CD14-positive monocyte (primary cell): ENCODE measurements at regions of chr7 and their contacts with region 1.

Region 1: GRCh38 chr7:2567679-2568278 is 9.0 kb downstream of the IQCE start:
- DNase-seq: peak in 2 of 3 donors; percentile 27 to 38
- H3K4me3 ChIP-seq: peak overlapping the region in 1 of 3 experiments; percentile 36
- H3K4me3 Mint-ChIP-seq: peak overlapping the region in 1 of 2 donors; percentile 67
- H3K27ac ChIP-seq: no peak overlapping the region
- H3K27ac Mint-ChIP-seq: no peak overlapping the region
- H3K4me1 ChIP-seq: peaks cover 8 to 9% of the 10 kb centered on the region in 2 donors
- H3K4me1 Mint-ChIP-seq: peaks cover 8% of the 10 kb centered on the region
- H3K27me3 ChIP-seq: no peaks in the 10 kb centered on the region
- H3K27me3 Mint-ChIP-seq: peaks cover 0 to 4% (median 0%) of the 10 kb centered on the region in 3 donors
- CTCF ChIP-seq: peak; percentile 68

Region 2: GRCh38 chr7:2477447-2478398 is 90.1 kb before region 1 on chr7:
- intact Hi-C with region 1: loop called in 1 of 2 experiments (anchors 10 kb)
- DNase-seq: peak; percentile 72 to 73 (median 72)
- H3K4me3 ChIP-seq: peak overlapping the region in 1 of 3 experiments; percentile 46
- H3K4me3 Mint-ChIP-seq: peak overlapping the region; percentile 20 to 46
- H3K27ac ChIP-seq: no peak overlapping the region
- H3K27ac Mint-ChIP-seq: no peak overlapping the region
- H3K4me1 ChIP-seq: peaks cover 11 to 18% of the 10 kb centered on the region in 2 donors
- H3K4me1 Mint-ChIP-seq: peaks cover 16% of the 10 kb centered on the region
- H3K27me3 ChIP-seq: peaks cover 0 to 4% of the 10 kb centered on the region in 2 donors
- H3K27me3 Mint-ChIP-seq: peaks cover 10 to 26% (median 14%) of the 10 kb centered on the region in 3 donors
- CTCF ChIP-seq: peak; percentile 96

Region 3: GRCh38 chr7:2608921-2609411 is 41.2 kb after region 1 on chr7:
- intact Hi-C with region 1: loop called in 1 of 2 experiments (anchors 5 kb)
- DNase-seq: peak; percentile 80 to 83 (median 81)
- H3K4me3 ChIP-seq: peak overlapping the region; percentile 30 to 68 (median 30)
- H3K4me3 Mint-ChIP-seq: peak overlapping the region; percentile 77 to 88
- H3K27ac ChIP-seq: peak overlapping the region; percentile 84 to 87
- H3K27ac Mint-ChIP-seq: peak overlapping the region; percentile 94 to 99 (median 95)
- H3K4me1 ChIP-seq: peaks cover 49 to 80% of the 10 kb centered on the region in 2 donors
- H3K4me1 Mint-ChIP-seq: peaks cover 64% of the 10 kb centered on the region
- H3K27me3 ChIP-seq: no peaks in the 10 kb centered on the region
- H3K27me3 Mint-ChIP-seq: peaks cover 0 to 3% (median 2%) of the 10 kb centered on the region in 3 donors
- CTCF ChIP-seq: peak; percentile 42